Lower leg skin (tissue), 4 donors: ENCODE measurements at regions of chr13 and their contacts with region 1.

Region 1: GRCh38 chr13:113400621-113401451 is 36.9 kb upstream of the GRTP1 start:
- DNase-seq: peak in 1 of 2 donors; percentile 78
- H3K4me3 ChIP-seq: no peak overlapping the region
- CTCF ChIP-seq: no peak
- POLR2A ChIP-seq: no peak

Region 2: GRCh38 chr13:112968908-112969691 is 431.7 kb before region 1 on chr13 and contains the start of gene MCF2L:
- intact Hi-C with region 1: loop called (anchors 10 kb)
- DNase-seq: no peak
- H3K4me3 ChIP-seq: peak within 1 kb of the TSS; percentile 19
- CTCF ChIP-seq: no peak
- POLR2A ChIP-seq: no peak
- total RNA-seq, gene MCF2L: 46.5 to 89.7 (median 55.0) TPM

Region 3: DNA sequence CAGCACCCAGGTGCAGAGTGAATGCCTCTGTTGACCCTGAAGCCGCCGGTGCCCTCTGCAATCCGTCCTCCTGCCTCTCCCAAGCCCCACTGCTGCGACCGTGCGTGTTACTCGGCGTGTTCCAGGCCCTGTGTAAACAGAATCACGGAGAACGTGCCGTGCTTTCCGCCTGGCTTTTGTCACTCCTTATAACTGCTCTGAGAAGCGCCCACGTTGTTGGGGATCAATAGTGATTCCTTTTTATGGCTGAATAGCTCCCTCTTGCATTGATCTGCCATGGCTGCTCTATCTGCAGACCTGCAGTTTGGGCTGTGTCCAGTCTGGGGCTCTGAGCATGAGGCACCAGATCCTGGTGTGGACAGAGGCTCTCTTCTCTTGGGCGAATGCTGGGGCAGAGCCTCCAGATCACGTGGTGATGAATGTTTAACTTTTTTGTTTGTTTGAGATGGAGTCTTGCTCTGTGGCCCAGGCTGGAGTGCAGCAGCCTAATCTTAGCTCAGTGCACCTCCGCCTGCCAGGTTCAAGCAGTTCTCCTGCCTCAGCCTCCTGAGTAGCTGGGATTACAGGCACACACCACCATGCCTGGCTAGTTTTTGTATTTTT is 36.7 kb after region 1 on chr13:
- intact Hi-C with region 1: no loop called
- DNase-seq: no peak
- H3K4me3 ChIP-seq: no peak overlapping the region
- CTCF ChIP-seq: no peak
- POLR2A ChIP-seq: no peak

Region 4: DNA sequence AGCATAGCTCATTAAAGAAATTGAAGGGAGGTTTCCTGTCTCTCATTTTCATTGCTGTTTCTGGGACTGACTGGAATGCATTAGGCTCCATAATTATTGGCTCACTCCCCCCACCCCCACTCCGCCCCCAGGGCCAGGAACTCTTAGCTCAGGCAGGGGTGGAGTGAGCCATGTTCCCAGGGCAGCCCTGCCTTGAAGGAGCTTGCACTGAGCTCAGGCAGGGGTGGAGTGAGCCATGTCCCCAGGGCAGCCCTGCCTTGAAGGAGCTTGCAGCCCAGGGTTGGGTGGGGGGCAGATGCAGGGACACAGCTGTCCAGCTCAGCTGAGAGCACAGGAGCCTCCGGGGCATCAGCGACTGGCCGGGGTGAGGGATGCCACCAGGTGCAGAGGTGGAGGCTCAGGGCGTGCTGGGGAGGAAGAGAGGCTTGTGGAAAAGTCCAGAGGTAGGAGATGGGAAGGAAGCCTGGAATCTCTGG is 144.7 kb after region 1 on chr13:
- intact Hi-C with region 1: no loop called
- DNase-seq: peak in 1 of 2 donors; percentile 82
- H3K4me3 ChIP-seq: no peak overlapping the region
- CTCF ChIP-seq: no peak
- POLR2A ChIP-seq: no peak